PC-3 (cell line): ENCODE measurements at regions of chr12 and their contacts with region 1.

Region 1: GRCh38 chr12:127401005-127401404 is 866.0 kb upstream of the TMEM132C start:
- DNase-seq: peak; percentile 74
- ATAC-seq: peak; percentile 74
- H3K4me3 ChIP-seq: no peak overlapping the region
- H3K27ac ChIP-seq: no peak overlapping the region
- H3K4me1 ChIP-seq: peaks cover 26% of the 10 kb centered on the region
- H3K27me3 ChIP-seq: no peaks in the 10 kb centered on the region
- CTCF ChIP-seq: no peak

Region 2: DNA sequence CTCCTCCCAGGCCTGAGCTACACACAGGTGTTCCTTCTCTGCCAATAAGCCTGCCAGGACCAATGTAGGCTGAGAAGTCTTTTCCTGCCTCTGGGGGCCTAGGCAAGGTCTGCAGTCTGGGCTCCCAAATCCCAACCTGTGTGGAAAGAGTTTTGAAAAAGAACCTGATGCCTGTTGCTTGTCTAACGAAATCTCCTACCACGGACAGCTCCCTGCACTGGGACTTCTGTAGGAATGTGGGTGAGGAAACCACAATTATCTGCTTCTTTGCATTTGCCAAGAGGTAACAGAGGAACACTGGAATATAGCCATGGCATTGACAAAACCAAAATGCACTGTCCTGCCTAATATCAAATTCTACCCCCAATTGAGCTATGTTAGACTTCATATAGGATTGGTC is 11.1 kb before region 1 on chr12:
- CTCF ChIA-PET with region 1: interaction called, 13 read pairs
- POLR2A ChIA-PET with region 1: no interaction called
- intact Hi-C with region 1: no loop called
- DNase-seq: peak; percentile 94
- ATAC-seq: peak; percentile 40
- H3K4me3 ChIP-seq: no peak overlapping the region
- H3K27ac ChIP-seq: no peak overlapping the region
- H3K4me1 ChIP-seq: peaks cover 21% of the 10 kb centered on the region
- H3K27me3 ChIP-seq: peaks cover 5% of the 10 kb centered on the region; the same call in 1 of the 2 replicates
- CTCF ChIP-seq: no peak

Region 3: DNA sequence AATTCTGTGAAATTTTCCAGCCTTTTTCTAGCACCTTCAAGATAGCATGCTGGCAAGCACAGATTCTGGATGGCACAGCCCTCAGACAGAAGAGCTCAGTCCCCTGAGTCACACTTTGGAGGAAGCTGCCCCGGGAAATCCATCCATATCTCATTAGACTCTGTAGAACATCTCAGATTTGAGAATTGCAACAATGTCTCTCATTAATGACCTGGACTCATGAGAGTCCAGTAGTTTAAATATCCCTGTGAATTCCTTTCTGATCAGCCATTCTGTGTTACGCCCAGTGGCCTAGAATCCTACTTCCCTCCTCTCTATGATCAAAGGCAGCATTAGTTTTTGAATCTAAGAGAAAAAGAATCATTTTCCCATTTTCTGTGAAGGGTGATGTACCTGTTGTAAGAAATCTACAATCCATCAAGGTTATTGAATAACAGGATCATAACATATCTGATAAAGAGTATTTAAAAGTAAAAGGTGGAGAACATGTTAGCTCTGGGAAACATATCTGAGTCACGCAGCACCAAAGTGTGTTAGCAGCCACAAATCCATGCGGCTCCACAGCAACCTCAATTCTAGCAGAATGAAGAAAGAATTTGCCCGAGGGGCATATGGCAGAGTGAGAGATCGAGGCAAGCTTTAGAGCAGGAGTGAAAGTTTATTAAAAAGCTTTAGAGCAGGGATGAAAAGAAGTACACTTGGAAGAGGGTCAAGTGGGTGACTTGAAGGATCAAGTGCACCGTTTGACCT is 10.3 kb after region 1 on chr12:
- CTCF ChIA-PET with region 1: no interaction called
- POLR2A ChIA-PET with region 1: interaction called, 10 read pairs
- intact Hi-C with region 1: no loop called
- DNase-seq: no peak
- ATAC-seq: no peak
- H3K4me3 ChIP-seq: no peak overlapping the region
- H3K27ac ChIP-seq: no peak overlapping the region
- H3K4me1 ChIP-seq: peaks cover 10% of the 10 kb centered on the region
- H3K27me3 ChIP-seq: no peaks in the 10 kb centered on the region
- CTCF ChIP-seq: no peak